A549 (cell line): ENCODE measurements at regions of chr12 and their contacts with region 1.

Region 1: DNA sequence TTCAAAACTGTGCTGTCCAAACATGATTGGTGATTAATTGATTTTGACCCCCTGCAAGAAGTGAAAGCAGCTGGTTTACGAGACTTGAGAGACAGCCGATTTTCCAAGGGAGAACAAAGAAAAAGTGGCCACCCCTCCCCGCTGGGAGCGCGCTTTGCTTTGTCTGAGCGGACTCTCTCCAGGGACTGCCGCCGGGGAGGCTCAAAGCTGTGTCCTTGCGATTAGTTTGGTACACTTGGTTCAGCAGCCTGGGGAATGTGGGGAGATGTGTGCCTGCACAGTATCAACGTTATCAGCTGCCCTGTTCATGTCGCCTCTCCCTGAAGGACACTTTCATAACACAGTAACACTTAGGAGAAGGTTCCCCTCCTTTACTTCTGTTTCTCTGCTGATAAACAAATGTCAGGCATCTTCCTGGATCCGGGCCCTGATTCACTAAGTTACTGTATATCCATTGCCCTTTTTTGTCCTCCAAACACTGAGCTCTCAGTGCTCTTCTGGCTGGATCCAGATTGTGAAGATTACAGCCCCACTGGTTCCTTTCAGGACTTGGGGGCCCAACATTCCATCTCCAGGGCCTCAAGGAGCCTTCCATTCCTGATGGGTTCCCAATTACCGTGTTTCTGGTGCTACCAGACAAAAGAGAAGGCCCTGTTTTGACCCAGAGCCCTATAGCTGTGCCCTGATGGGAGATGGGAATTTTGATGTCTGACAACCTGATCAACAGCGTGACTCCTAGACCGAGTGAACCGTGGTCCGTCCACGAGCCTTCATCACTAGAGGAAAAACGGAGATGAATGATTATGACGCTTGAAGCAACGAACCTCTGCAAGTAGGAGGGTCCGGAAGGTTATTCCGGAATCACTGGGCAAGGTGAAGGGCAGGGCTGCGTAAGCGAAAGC is 31.7 kb upstream of the TUBA1C start:
- DNase-seq: no peak
- ATAC-seq: no peak
- H3K4me3 ChIP-seq: no peak overlapping the region
- H3K27ac ChIP-seq: peak overlapping the region in 1 of 2 experiments; percentile 92; a peak in 1 of 6 replicates
- H3K4me1 ChIP-seq: peaks cover 3% of the 10 kb centered on the region; the same call in 1 of the 3 replicates
- CTCF ChIP-seq: no peak
- EP300 ChIP-seq: no peak
- POLR2A ChIP-seq: no peak
- RAD21 ChIP-seq: no peak

Region 2: GRCh38 chr12:49188914-49189367 is 44.2 kb before region 1 on chr12 and contains the start of gene TUBA1A:
- CTCF ChIA-PET with region 1: interaction called, 20 read pairs
- POLR2A ChIA-PET with region 1: interaction called, 21 read pairs
- DNase-seq: peak; percentile 95 to 99
- ATAC-seq: peak; percentile 95
- H3K4me3 ChIP-seq: peak within 1 kb of the TSS; percentile 89
- H3K27ac ChIP-seq: peak within 1 kb of the TSS; percentile 90 to 92
- H3K4me1 ChIP-seq: peaks cover 19% of the 10 kb centered on the region
- CTCF ChIP-seq: no peak
- EP300 ChIP-seq: no peak
- POLR2A ChIP-seq: peak; percentile 99
- RAD21 ChIP-seq: peak in 1 of 2 experiments; percentile 47; a peak in 3 of 5 replicates
- polyA plus RNA-seq, gene TUBA1A: 163 and 231 TPM in 2 replicates

Region 3: GRCh38 chr12:49200919-49201594 is 32.1 kb before region 1 on chr12:
- CTCF ChIA-PET with region 1: interaction called, 15 read pairs
- POLR2A ChIA-PET with region 1: interaction called, 8 read pairs
- DNase-seq: peak; percentile 71 to 84
- ATAC-seq: peak; percentile 81 to 91
- H3K4me3 ChIP-seq: 0 out of 3 replicates have a peak overlapping the region, but pooled peaks have one; percentile 1
- H3K27ac ChIP-seq: peak overlapping the region; percentile 57 to 72; a peak in 5 of 6 replicates
- H3K4me1 ChIP-seq: peaks cover 30% of the 10 kb centered on the region
- CTCF ChIP-seq: no peak
- EP300 ChIP-seq: no peak
- POLR2A ChIP-seq: no peak
- RAD21 ChIP-seq: no peak

Region 4: DNA sequence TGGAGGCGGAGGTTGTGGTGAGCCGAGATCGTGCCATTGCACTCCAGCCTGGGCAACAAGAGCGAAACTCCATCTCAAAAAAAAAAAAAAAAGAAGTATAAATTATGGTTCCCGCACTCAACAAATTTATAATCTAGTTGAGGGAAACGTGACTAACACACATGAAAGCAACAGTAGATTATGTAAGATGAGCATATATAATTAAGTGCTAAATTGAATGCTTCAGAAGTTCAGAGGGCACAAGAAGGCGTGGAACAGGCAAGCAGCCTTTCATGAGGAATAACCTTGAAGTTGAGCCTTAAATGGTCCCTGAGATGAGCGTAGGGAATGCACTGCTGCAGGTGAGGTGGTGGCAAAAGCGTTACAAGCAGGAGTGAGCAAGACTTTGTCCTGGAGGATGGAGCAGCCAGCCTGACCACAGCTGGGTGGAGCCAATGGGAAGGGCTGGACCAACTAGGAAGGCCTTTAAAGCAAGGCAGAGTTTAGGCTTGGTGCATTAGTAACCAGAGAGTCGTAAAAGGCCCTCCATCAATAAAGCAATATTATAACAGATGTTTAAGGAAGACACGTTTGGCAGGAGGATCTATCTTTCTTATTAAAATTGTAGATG is 13.7 kb before region 1 on chr12:
- CTCF ChIA-PET with region 1: interaction called, 53 read pairs
- POLR2A ChIA-PET with region 1: interaction called, 8 read pairs
- DNase-seq: no peak
- ATAC-seq: peak in 1 of 2 experiments; percentile 30; a peak in 1 of 6 replicates
- H3K4me3 ChIP-seq: no peak overlapping the region
- H3K27ac ChIP-seq: no peak overlapping the region
- H3K4me1 ChIP-seq: peaks cover 10% of the 10 kb centered on the region
- CTCF ChIP-seq: no peak
- EP300 ChIP-seq: no peak
- POLR2A ChIP-seq: no peak
- RAD21 ChIP-seq: no peak

Region 5: GRCh38 chr12:49244176-49244575 is 11.0 kb after region 1 on chr12:
- CTCF ChIA-PET with region 1: interaction called, 64 read pairs
- POLR2A ChIA-PET with region 1: no interaction called
- DNase-seq: no peak
- ATAC-seq: no peak
- H3K4me3 ChIP-seq: no peak overlapping the region
- H3K27ac ChIP-seq: no peak overlapping the region
- H3K4me1 ChIP-seq: no peaks in the 10 kb centered on the region
- CTCF ChIP-seq: no peak
- EP300 ChIP-seq: no peak
- POLR2A ChIP-seq: no peak
- RAD21 ChIP-seq: no peak

Region 6: GRCh38 chr12:49253088-49253487 is 19.9 kb after region 1 on chr12:
- CTCF ChIA-PET with region 1: interaction called, 19 read pairs
- POLR2A ChIA-PET with region 1: no interaction called
- DNase-seq: no peak
- ATAC-seq: peak in 1 of 2 experiments; percentile 53; a peak in 3 of 6 replicates
- H3K4me3 ChIP-seq: no peak overlapping the region
- H3K27ac ChIP-seq: no peak overlapping the region
- H3K4me1 ChIP-seq: no peaks in the 10 kb centered on the region
- CTCF ChIP-seq: no peak
- EP300 ChIP-seq: no peak
- POLR2A ChIP-seq: no peak
- RAD21 ChIP-seq: no peak

Region 7: DNA sequence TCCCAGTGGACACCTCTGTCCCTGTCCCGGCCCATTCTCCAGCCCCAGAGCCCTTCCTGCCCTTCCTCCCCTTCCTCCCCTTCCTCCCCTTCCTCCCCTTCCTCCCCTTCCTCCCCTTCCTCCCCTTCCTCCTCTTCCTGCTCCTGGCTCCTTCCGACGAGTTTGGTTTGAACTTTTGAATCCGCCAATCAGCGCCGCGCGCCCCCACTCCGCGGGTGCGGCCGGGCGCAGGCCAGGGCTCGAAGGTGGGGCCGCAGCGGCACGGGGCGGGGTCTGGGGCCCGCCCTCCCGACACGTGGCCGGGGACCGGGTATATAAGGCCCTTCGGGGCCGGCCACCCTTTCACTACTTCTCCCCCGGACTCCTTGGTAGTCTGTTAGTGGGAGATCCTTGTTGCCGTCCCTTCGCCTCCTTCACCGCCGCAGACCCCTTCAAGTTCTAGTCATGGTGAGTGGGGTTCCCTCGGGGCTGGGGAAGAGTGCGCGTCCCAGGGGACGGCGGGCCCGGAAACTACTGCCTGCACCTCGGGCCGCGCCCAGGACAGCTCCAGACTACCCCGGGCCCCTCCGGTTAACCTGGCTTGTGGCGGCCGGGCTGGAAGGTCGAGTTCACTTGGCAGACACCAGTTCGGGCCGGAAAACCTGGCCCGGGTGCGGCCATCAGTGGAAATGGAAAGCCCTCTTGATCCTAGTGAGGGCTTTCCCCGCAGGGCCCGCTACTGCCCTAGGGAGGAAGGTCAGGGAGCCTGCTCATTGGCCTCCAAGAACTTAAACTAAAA is 31.7 kb after region 1 on chr12 and contains the start of gene TUBA1C:
- CTCF ChIA-PET with region 1: interaction called, 14 read pairs
- POLR2A ChIA-PET with region 1: interaction called, 4 read pairs
- DNase-seq: peak; percentile 91 to 97
- ATAC-seq: peak; percentile 80 to 83
- H3K4me3 ChIP-seq: peak within 1 kb of the TSS; percentile 71
- H3K27ac ChIP-seq: peak within 1 kb of the TSS; percentile 94 to 100
- H3K4me1 ChIP-seq: peaks cover 36% of the 10 kb centered on the region
- CTCF ChIP-seq: no peak
- EP300 ChIP-seq: no peak
- POLR2A ChIP-seq: peak; percentile 99
- RAD21 ChIP-seq: no peak
- polyA plus RNA-seq, gene TUBA1C: 1,183 and 1,488 TPM in 2 replicates